ENCODE measurements at regions of chrX and their contacts with region 1.

Region 1: DNA sequence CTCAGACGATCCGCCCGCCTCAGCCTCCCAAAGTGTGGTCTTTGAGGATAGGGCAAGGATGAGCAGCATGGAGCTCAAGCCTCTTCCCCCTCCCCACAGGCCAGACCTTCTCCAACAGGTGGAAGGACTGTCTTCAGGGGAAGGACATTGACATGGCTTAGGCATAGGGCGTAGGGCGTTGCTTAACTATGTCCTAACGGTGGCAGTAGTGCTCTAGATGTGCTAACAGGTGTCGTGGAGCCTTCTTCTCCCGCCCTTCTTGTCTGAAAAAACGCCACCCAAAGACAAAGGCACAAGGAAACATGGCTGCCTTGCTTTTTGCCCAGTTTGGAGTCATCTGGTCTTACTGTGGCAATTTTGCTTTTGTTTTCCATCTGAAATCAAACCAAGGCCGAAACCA is 219.8 kb downstream of the OR13H1 start:
- DNase-seq: peak; percentile 95
- ATAC-seq: peak; percentile 90
- H3K4me3 ChIP-seq: peak overlapping the region; percentile 51; the same call in 1 of the 2 replicates
- H3K27ac ChIP-seq: peak overlapping the region; percentile 80
- H3K4me1 ChIP-seq: no peaks in the 10 kb centered on the region
- H3K27me3 ChIP-seq: no peaks in the 10 kb centered on the region
- CTCF ChIP-seq: peak; percentile 74 to 83 (median 74)
- EP300 ChIP-seq: peak in 1 of 2 experiments; percentile 24; a peak in 1 of 4 replicates
- POLR2A ChIP-seq: no peak
- RAD21 ChIP-seq: peak; percentile 78

Region 2: DNA sequence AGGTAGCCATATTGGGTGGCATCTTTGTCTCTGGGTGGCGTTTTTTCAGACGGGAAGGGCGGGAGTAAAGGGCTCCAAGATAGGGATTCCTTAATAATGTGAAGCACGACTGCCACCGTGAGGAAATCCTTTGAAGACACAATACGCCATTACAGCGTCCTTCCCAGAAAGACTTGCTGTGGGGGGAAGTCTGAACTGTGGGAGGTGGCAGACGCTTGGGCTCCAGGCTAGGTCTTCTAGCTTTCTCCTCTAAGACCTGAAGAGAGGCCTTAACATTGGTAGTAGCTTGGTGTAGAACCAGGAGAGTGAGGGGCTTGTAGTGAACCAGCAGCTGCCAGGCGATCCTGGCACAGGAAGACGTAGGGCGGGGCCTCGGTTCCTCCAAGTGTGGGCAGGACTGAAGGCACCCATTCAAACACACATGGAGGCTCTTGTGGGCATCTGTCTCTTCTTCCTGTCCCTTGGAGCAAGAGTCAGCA is 22.5 kb before region 1 on chrX:
- CTCF ChIA-PET with region 1: interaction called, 12 read pairs
- POLR2A ChIA-PET with region 1: no interaction called
- RAD21 ChIA-PET with region 1: interaction called, 10 read pairs
- SMC1A ChIA-PET with region 1: no interaction called
- in situ Hi-C with region 1: no loop called
- intact Hi-C with region 1: loop called (anchors 1 kb)
- DNase-seq: peak; percentile 87
- ATAC-seq: peak; percentile 83
- H3K4me3 ChIP-seq: peak overlapping the region; percentile 63
- H3K27ac ChIP-seq: peak overlapping the region; percentile 95
- H3K4me1 ChIP-seq: no peaks in the 10 kb centered on the region
- H3K27me3 ChIP-seq: no peaks in the 10 kb centered on the region
- CTCF ChIP-seq: peak; percentile 22 to 54 (median 43); a peak in 5 of 6 replicates
- EP300 ChIP-seq: no peak
- POLR2A ChIP-seq: 0 out of 2 replicates have a peak, but pooled peaks have one; percentile 28
- RAD21 ChIP-seq: peak; percentile 64

Region 3: DNA sequence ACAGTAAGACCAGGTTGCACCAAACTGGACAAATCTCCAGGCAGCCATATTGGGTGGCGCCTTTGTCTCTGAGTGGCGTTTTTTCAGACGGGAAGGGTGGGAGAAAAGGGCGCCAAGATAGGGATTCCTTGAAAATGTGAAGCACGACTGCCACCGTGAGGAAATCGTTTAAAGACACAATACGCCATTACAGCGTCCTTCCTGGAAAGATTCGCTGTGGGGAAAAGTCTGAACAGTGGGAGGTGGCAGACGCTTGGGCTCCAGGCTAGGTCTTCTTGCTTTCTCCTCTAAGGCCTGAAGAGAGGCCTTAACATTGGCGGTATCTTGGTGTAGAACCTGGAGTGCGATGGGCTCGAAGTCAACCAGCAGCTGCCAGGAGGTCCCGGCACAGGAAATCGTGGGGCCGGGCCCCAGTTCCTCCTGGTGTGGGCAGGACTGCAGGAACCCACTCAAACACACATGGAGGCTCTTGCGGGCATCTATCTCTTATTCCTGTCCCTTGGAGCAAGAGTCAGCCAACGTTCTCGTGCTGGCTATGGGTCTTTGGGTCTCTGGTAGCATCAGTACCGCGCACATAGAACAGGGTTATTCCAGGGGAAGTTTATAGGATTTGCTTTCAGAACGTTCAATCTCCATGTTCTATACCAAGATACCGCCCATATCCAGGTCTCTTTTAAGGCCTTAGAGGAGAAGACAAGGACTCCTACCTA is 11.0 kb before region 1 on chrX:
- CTCF ChIA-PET with region 1: interaction called, 12 read pairs
- POLR2A ChIA-PET with region 1: no interaction called
- RAD21 ChIA-PET with region 1: interaction called, 4 read pairs
- SMC1A ChIA-PET with region 1: interaction called, 3 read pairs
- in situ Hi-C with region 1: no loop called
- intact Hi-C with region 1: loop called (anchors 1 kb)
- DNase-seq: peak; percentile 87
- ATAC-seq: peak; percentile 82
- H3K4me3 ChIP-seq: peak overlapping the region; percentile 38; the same call in 1 of the 2 replicates
- H3K27ac ChIP-seq: peak overlapping the region; percentile 94
- H3K4me1 ChIP-seq: no peaks in the 10 kb centered on the region
- H3K27me3 ChIP-seq: no peaks in the 10 kb centered on the region
- CTCF ChIP-seq: peak; percentile 26 to 54 (median 36); a peak in 4 of 6 replicates
- EP300 ChIP-seq: no peak
- POLR2A ChIP-seq: no peak
- RAD21 ChIP-seq: peak; percentile 70

Region 4: GRCh38 chrX:131783555-131784308 is 20.1 kb after region 1 on chrX:
- CTCF ChIA-PET with region 1: interaction called, 11 read pairs
- POLR2A ChIA-PET with region 1: interaction called, 3 read pairs
- RAD21 ChIA-PET with region 1: interaction called, 7 read pairs
- SMC1A ChIA-PET with region 1: interaction called, 5 read pairs
- in situ Hi-C with region 1: no loop called
- intact Hi-C with region 1: loop called (anchors 1 kb)
- DNase-seq: peak; percentile 90
- ATAC-seq: peak; percentile 74
- H3K4me3 ChIP-seq: peak overlapping the region; percentile 9; the same call in 1 of the 2 replicates
- H3K27ac ChIP-seq: no peak overlapping the region
- H3K4me1 ChIP-seq: no peaks in the 10 kb centered on the region
- H3K27me3 ChIP-seq: no peaks in the 10 kb centered on the region
- CTCF ChIP-seq: peak; percentile 41 to 71 (median 51); a peak in 5 of 6 replicates
- EP300 ChIP-seq: no peak
- POLR2A ChIP-seq: no peak
- RAD21 ChIP-seq: peak; percentile 77

Region 5: DNA sequence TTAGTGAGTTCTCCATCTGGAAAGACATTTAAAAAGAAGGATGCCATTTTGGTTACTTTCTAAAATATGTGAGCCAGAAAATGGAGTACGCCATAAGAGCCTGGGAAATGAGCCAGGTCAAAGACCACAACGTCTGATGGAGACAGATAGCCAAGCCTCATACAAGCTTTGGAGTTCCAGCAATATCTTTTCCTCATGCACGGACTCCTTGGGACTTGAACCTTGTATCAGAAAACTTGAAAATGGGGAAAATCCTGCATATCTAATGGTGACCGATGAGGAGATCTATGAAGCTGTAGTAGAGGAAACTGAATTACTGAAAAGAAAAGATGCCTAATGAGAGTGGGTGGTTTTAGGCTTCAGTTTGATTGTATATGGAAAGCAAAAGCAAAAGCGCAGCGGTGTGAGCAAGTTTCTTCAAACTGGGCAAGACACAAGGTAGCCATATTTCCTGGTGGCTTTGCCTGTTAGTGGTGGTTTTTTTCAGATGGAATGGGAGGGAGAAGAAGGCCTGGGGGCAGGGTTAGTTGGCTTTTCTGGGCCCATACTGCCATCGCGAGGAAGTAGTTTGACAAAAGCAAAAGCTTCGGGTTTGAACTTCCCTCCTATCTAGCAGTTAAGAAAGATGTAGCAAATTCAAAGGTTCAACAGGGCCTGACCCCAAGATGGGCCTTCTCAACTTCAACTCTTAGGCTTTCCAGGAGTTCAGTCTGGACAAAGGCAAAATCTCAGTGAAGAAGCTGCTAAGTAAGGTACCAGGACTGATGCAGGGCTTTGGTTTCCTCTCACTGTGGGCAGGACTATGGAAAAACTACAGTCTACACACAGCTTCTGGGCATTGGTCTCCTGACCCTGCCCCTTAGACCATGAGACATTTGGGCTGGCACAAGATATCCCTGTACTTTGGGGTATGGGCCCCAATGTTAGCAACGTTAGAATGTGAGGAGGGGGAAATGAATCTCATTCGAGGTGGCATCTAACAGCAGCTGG is 49.5 kb after region 1 on chrX:
- CTCF ChIA-PET with region 1: interaction called, 3 read pairs
- POLR2A ChIA-PET with region 1: no interaction called
- RAD21 ChIA-PET with region 1: interaction called, 7 read pairs
- SMC1A ChIA-PET with region 1: interaction called, 3 read pairs
- in situ Hi-C with region 1: no loop called
- intact Hi-C with region 1: loop called (anchors 1 kb)
- DNase-seq: peak; percentile 92
- ATAC-seq: peak; percentile 95
- H3K4me3 ChIP-seq: peak overlapping the region; percentile 58
- H3K27ac ChIP-seq: peak overlapping the region; percentile 84
- H3K4me1 ChIP-seq: peaks cover 13% of the 10 kb centered on the region; the same call in 1 of the 2 replicates
- H3K27me3 ChIP-seq: no peaks in the 10 kb centered on the region
- CTCF ChIP-seq: peak; percentile 45 to 86 (median 64); a peak in 5 of 6 replicates
- EP300 ChIP-seq: peak in 1 of 2 experiments; percentile 53; a peak in 2 of 4 replicates
- POLR2A ChIP-seq: no peak
- RAD21 ChIP-seq: peak; percentile 89

Measured in GM12878 (cell line).